ENCODE measurements at regions of chr12 and their contacts with region 1.

Region 1: GRCh38 chr12:14629832-14630710 is 62.4 kb upstream of the PLBD1 start:
- DNase-seq: peak; percentile 72
- ATAC-seq: peak; percentile 97
- H3K4me3 Mint-ChIP-seq: no peak overlapping the region
- H3K27ac Mint-ChIP-seq: no peak overlapping the region
- H3K4me1 Mint-ChIP-seq: peaks cover 4% of the 10 kb centered on the region
- H3K27me3 Mint-ChIP-seq: peaks cover 7% of the 10 kb centered on the region

Region 2: DNA sequence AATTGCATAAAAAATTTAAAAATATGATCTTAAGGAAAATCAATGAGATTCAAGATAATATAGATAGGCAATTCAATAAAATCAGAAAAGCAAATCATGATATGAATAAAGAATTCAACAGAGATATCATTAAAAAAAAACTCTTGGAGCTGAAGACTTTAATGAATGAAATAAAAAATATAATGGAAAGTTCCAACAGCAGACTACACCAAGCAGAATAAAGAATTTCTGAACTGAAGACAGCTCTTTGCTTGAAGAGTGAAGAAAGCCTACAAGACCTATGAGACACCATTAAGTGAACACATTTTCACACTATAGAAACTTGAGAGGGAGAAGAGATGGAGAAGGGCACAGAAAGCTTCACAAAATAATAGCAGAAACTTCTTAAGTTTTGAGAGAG is 108.2 kb before region 1 on chr12:
- CTCF ChIA-PET with region 1: no interaction called
- POLR2A ChIA-PET with region 1: no interaction called
- DNase-seq: no peak
- ATAC-seq: no peak
- H3K4me3 Mint-ChIP-seq: no peak overlapping the region
- H3K27ac Mint-ChIP-seq: no peak overlapping the region
- H3K4me1 Mint-ChIP-seq: no peaks in the 10 kb centered on the region
- H3K27me3 Mint-ChIP-seq: no peaks in the 10 kb centered on the region

Region 3: DNA sequence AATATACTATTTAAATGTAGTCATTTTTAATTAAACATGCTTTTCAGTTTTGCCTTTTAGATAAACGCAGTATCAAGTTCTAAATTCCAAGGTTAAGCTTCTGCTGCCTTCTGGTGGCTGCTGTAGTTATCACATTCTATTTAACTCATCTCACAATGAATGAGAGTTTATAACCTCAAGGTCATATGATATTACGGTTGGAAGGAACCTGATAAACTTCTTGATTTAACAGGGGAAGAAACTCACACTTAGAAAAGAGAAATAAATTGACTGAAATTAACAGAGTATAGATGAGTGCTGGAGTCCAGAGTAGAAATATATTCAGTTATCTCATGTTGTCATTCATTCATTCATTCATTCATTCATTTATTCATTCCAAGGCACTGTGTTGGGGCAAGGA is 34.4 kb after region 1 on chr12:
- CTCF ChIA-PET with region 1: interaction called, 52 read pairs
- POLR2A ChIA-PET with region 1: no interaction called
- DNase-seq: peak; percentile 64
- ATAC-seq: peak; percentile 47
- H3K4me3 Mint-ChIP-seq: no peak overlapping the region
- H3K27ac Mint-ChIP-seq: no peak overlapping the region
- H3K4me1 Mint-ChIP-seq: peaks cover 9% of the 10 kb centered on the region
- H3K27me3 Mint-ChIP-seq: peaks cover 5% of the 10 kb centered on the region

Region 4: GRCh38 chr12:14716848-14717444 is 86.9 kb after region 1 on chr12:
- CTCF ChIA-PET with region 1: interaction called, 14 read pairs
- POLR2A ChIA-PET with region 1: no interaction called
- DNase-seq: peak; percentile 67
- ATAC-seq: peak; percentile 75
- H3K4me3 Mint-ChIP-seq: no peak overlapping the region
- H3K27ac Mint-ChIP-seq: no peak overlapping the region
- H3K4me1 Mint-ChIP-seq: peaks cover 17% of the 10 kb centered on the region
- H3K27me3 Mint-ChIP-seq: peaks cover 12% of the 10 kb centered on the region